Activated CD4-positive, alpha-beta memory T cell treated with anti-CD3 and anti-CD28 coated beads, Interleukin-2, amount 10 ng/mL, durations not matched to agents 7 days and 5 days (primary cell): ENCODE measurements at regions of chr15 and their contacts with region 1.

Region 1: GRCh38 chr15:90598031-90598577 is 68.4 kb downstream of the CRTC3 start:
- DNase-seq: peak; percentile 47
- H3K4me3 Mint-ChIP-seq: peak overlapping the region; percentile 60
- H3K27ac Mint-ChIP-seq: peak overlapping the region; percentile 100
- H3K4me1 Mint-ChIP-seq: peaks cover 81% of the 10 kb centered on the region
- H3K27me3 Mint-ChIP-seq: no peaks in the 10 kb centered on the region

Region 2: GRCh38 chr15:90539789-90540188 is 58.3 kb before region 1 on chr15:
- CTCF ChIA-PET with region 1: interaction called, 8 read pairs
- POLR2A ChIA-PET with region 1: interaction called, 29 read pairs
- DNase-seq: no peak
- H3K4me3 Mint-ChIP-seq: peak overlapping the region; percentile 84
- H3K27ac Mint-ChIP-seq: peak overlapping the region; percentile 95
- H3K4me1 Mint-ChIP-seq: peaks cover 69% of the 10 kb centered on the region
- H3K27me3 Mint-ChIP-seq: no peaks in the 10 kb centered on the region

Region 3: DNA sequence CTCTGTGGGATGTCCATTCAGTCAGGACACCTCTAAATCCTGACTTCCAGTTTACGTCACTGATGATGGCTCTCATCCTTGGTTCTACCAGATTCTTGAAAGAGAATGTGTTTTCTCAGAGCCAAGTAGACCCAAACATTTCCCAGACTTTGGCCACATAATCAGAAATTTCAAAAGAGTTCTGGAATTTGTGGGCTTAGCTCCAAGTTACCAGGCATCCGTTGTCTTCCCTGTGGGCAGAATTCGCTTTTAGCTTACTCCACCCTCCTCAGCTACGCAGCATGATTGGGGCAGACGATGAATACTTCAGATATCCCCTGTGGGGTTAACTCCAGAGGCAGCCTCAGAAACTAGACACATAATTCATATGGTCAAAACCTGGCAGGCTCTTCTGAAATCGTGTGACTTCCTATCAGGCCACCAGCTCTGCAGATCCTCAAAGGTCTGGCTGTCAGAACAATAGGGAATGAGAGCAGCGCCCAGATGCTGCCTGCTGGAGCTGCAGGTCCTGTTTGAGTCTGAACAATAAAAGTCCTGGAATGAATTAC is 37.8 kb before region 1 on chr15:
- CTCF ChIA-PET with region 1: interaction called, 4 read pairs
- POLR2A ChIA-PET with region 1: interaction called, 12 read pairs
- DNase-seq: no peak
- H3K4me3 Mint-ChIP-seq: no peak overlapping the region
- H3K27ac Mint-ChIP-seq: peak overlapping the region; percentile 42
- H3K4me1 Mint-ChIP-seq: peaks cover 80% of the 10 kb centered on the region
- H3K27me3 Mint-ChIP-seq: no peaks in the 10 kb centered on the region

Region 4: DNA sequence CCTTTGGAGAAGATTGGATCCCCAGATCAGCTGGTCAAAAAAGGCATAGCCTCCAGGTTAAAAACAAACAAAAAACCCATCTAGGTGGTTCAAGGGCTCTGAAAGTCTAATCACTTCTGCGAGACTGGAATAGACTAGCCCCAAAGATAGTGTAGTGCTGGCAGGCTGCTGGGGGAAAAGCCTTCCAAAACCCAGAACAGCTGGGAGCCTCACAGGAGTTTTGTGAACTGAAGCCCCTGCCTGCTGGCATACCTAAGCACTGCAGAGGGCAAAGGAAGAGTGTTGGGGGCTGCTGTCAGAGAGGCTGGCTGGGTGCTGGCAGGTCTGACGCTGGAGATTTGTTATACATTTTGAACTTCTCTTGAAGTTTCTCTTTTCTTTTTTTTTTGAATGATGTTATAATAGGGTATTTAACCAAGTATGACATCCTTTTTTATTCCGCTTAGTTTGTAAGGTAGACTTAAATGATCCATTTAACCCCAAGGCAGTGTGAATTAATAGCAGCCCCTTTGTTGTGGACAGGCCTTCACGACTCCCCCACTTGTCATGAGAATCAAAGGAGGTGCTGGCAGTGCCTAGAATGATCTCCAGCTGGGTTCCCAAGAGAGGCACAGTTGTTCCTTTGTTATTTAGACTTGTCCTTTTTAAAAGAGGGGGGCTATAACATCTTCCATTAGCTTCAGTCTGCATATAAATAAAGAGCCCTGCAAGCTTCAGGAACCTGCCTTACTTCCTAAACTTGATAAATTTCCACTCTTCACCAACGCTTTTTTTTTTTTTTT is 14.4 kb before region 1 on chr15:
- CTCF ChIA-PET with region 1: interaction called, 4 read pairs
- POLR2A ChIA-PET with region 1: interaction called, 12 read pairs
- DNase-seq: no peak
- H3K4me3 Mint-ChIP-seq: no peak overlapping the region
- H3K27ac Mint-ChIP-seq: no peak overlapping the region
- H3K4me1 Mint-ChIP-seq: peaks cover 46% of the 10 kb centered on the region
- H3K27me3 Mint-ChIP-seq: no peaks in the 10 kb centered on the region

Region 5: GRCh38 chr15:90620379-90621067 is 22.4 kb after region 1 on chr15:
- CTCF ChIA-PET with region 1: interaction called, 7 read pairs
- POLR2A ChIA-PET with region 1: interaction called, 10 read pairs
- DNase-seq: peak; percentile 52
- H3K4me3 Mint-ChIP-seq: peak overlapping the region; percentile 31
- H3K27ac Mint-ChIP-seq: peak overlapping the region; percentile 84
- H3K4me1 Mint-ChIP-seq: peaks cover 35% of the 10 kb centered on the region
- H3K27me3 Mint-ChIP-seq: no peaks in the 10 kb centered on the region

Region 6: GRCh38 chr15:90915808-90916440 is 317.8 kb after region 1 on chr15:
- CTCF ChIA-PET with region 1: no interaction called
- POLR2A ChIA-PET with region 1: no interaction called
- DNase-seq: no peak
- H3K4me3 Mint-ChIP-seq: no peak overlapping the region
- H3K27ac Mint-ChIP-seq: no peak overlapping the region
- H3K4me1 Mint-ChIP-seq: no peaks in the 10 kb centered on the region
- H3K27me3 Mint-ChIP-seq: no peaks in the 10 kb centered on the region

Region 7: GRCh38 chr15:90986807-90987507 is 388.9 kb after region 1 on chr15:
- CTCF ChIA-PET with region 1: no interaction called
- POLR2A ChIA-PET with region 1: no interaction called
- DNase-seq: no peak
- H3K4me3 Mint-ChIP-seq: no peak overlapping the region
- H3K27ac Mint-ChIP-seq: peak overlapping the region; percentile 61
- H3K4me1 Mint-ChIP-seq: peaks cover 69% of the 10 kb centered on the region
- H3K27me3 Mint-ChIP-seq: no peaks in the 10 kb centered on the region